Gastrocnemius medialis (tissue), 4 donors: ENCODE measurements at regions of chr3 and their contacts with region 1.

Region 1: GRCh38 chr3:66500576-66501482 is at the start of gene LRIG1:
- DNase-seq: peak; percentile 99
- ATAC-seq: peak; percentile 68 to 73
- H3K4me3 ChIP-seq: peak within 1 kb of the TSS; percentile 66 to 84 (median 74)
- H3K27ac ChIP-seq: peak within 1 kb of the TSS; percentile 88 to 98 (median 94)
- H3K4me1 ChIP-seq: peaks cover 35 to 37% of the 10 kb centered on the region in 2 donors
- H3K27me3 ChIP-seq: no peaks in the 10 kb centered on the region
- CTCF ChIP-seq: peak in 3 of 5 experiments; percentile 26 to 43 (median 33)
- POLR2A ChIP-seq: peak; percentile 90 to 93
- total RNA-seq, gene LRIG1: 45.3 to 103 (median 58.6) TPM

Region 2: DNA sequence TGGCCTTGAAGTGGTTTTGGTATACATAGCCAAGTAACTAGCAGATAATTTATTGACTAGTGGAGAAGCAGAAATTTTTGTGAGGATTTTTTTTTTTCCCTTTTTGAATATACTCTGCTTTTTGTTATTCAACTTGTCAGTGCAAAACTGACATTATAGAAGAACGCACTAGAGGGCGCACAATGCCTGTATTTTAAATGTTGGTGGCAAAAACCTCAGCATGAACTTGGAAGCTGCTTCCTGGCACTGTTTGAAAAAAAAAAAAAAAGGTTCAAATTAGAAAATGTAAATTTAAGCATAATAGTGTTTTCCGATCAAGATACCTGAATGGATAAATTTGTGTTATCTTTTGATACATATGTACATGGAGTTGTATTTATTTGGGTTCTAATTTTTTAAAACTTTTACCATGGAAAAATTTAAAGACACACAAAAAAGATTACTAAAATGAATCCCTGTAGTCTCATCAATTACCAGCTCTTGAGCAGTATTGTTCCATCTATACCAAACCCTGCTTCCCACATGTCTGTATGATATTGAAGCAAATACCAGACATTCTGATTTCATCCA is 224.0 kb before region 1 on chr3:
- in situ Hi-C with region 1: loop called in 2 of 4 experiments (anchors 25 kb)
- intact Hi-C with region 1: no loop called
- DNase-seq: peak; percentile 13 to 33
- ATAC-seq: peak in 1 of 2 donors; percentile 76
- H3K4me3 ChIP-seq: no peak overlapping the region
- H3K27ac ChIP-seq: no peak overlapping the region
- H3K4me1 ChIP-seq: peaks cover 10 to 12% of the 10 kb centered on the region in 2 donors
- H3K27me3 ChIP-seq: no peaks in the 10 kb centered on the region
- CTCF ChIP-seq: peak; percentile 41 to 72 (median 62)
- POLR2A ChIP-seq: no peak

Region 3: GRCh38 chr3:66418475-66418931 is 82.3 kb before region 1 on chr3:
- in situ Hi-C with region 1: no loop called
- intact Hi-C with region 1: loop called (anchors 2 kb)
- DNase-seq: peak; percentile 84 to 87
- ATAC-seq: peak; percentile 89 to 91
- H3K4me3 ChIP-seq: peak overlapping the region in 1 of 4 donors; percentile 22
- H3K27ac ChIP-seq: peak overlapping the region; percentile 70 to 91 (median 82)
- H3K4me1 ChIP-seq: peaks cover 38 to 51% of the 10 kb centered on the region in 2 donors
- H3K27me3 ChIP-seq: no peaks in the 10 kb centered on the region
- CTCF ChIP-seq: peak in 2 of 5 experiments; percentile 35 to 40
- POLR2A ChIP-seq: peak in 1 of 2 donors; percentile 25

Region 4: DNA sequence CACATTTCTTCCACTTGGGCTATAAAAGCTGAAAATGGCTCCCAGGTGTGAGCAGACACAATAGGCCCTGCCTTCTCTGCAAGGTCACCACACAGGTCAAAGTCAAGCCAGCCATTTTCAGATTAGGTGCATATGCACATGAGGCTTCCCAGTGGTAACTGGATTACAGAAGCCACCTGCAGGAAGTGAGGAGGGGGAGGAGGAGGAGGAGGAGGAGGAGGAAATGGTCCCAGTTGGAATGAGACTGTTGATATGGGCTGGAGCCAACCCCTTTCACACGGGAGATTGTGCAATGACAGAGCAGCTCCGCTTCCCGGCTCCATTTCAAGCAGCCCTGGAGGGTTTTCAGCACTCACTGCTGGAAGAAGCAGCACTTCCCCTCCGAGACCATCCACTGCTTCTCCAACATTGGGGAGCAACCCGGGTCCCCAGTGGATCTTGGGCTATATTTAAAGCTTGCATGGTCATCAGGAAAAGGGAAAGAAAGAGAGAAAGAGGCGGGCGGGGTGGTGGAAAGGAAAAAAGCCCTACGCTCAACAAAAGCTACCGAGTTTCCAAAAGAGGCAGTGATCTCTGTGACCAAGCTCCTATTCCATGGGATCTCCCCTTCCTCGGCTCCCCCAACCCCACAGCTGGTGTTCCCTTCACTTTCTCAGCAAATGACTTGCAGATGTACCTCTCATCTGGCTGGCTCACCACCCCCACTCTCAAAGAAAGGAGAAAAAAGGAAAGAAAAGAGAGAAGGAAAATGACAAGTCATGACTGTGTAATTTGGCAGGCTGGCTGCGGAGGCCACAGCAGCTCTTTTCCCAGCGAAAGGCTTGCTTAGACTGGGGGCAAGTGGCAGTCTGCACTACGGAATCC is 58.3 kb before region 1 on chr3:
- in situ Hi-C with region 1: loop called in 1 of 4 experiments (anchors 10 kb)
- intact Hi-C with region 1: loop called (anchors 2 kb)
- DNase-seq: peak; percentile 81 to 85
- ATAC-seq: peak; percentile 94 to 96
- H3K4me3 ChIP-seq: peak overlapping the region; percentile 20 to 49 (median 36)
- H3K27ac ChIP-seq: peak overlapping the region; percentile 78 to 95 (median 86)
- H3K4me1 ChIP-seq: peaks cover 56 to 60% of the 10 kb centered on the region in 2 donors
- H3K27me3 ChIP-seq: no peaks in the 10 kb centered on the region
- CTCF ChIP-seq: peak in 1 of 5 experiments; percentile 6
- POLR2A ChIP-seq: no peak

Region 5: GRCh38 chr3:66762916-66763710 is 262.3 kb after region 1 on chr3:
- in situ Hi-C with region 1: no loop called
- intact Hi-C with region 1: loop called (anchors 5 kb)
- DNase-seq: peak; percentile 56 to 66
- ATAC-seq: peak; percentile 89 to 94
- H3K4me3 ChIP-seq: no peak overlapping the region
- H3K27ac ChIP-seq: peak overlapping the region; percentile 33 to 87 (median 82)
- H3K4me1 ChIP-seq: peaks cover 29 to 33% of the 10 kb centered on the region in 2 donors
- H3K27me3 ChIP-seq: no peaks in the 10 kb centered on the region
- CTCF ChIP-seq: no peak
- POLR2A ChIP-seq: no peak

Region 6: GRCh38 chr3:66822186-66823008 is 321.6 kb after region 1 on chr3:
- in situ Hi-C with region 1: loop called (anchors 10 to 25 kb)
- intact Hi-C with region 1: loop called (anchors 5 kb)
- DNase-seq: peak; percentile 15 to 60
- ATAC-seq: peak; percentile 88 to 94
- H3K4me3 ChIP-seq: no peak overlapping the region
- H3K27ac ChIP-seq: no peak overlapping the region
- H3K4me1 ChIP-seq: no peaks in the 10 kb centered on the region
- H3K27me3 ChIP-seq: no peaks in the 10 kb centered on the region
- CTCF ChIP-seq: peak; percentile 73 to 83 (median 80)
- POLR2A ChIP-seq: no peak